ENCODE measurements at regions of chr3 and their contacts with region 1.

Region 1: DNA sequence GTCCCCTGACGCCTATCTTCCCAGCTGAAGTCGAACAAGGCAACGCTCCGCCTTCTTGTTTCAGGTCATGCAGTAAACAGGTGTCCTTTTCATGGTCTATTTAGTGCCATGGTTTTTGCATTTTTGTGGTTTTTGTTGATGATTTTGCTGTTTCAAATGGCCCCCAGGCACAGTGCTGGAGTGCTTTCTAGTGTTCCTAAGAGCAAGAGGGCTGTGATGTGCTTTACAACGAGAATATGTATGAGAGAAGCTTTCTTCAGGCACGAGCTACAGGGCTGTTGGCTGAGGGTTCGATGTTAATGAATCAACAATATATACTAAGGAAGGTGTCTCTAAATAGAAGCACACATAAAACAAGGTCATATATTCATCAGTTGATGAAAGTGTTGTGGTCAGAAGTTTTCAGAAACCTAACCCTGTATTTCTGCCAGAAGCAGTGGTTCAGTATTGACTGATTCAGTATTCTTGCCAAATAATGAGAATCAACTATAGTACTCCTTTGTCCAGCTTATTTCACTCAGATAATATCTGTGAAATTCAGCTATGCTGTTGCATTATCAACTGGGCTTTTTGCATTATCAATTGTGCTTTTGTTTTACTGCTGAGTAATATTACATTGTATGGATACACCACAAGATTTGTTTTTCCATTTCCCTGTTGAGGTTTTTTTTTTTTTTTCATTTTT is 18.5 kb downstream of the LIMD1 start:
- DNase-seq: peak; percentile 23
- ATAC-seq: no peak
- H3K4me3 ChIP-seq: no peak overlapping the region
- H3K27ac ChIP-seq: no peak overlapping the region
- H3K4me1 ChIP-seq: peaks cover 34% of the 10 kb centered on the region
- H3K27me3 ChIP-seq: no peaks in the 10 kb centered on the region
- CTCF ChIP-seq: no peak
- POLR2A ChIP-seq: no peak
- RAD21 ChIP-seq: no peak

Region 2: GRCh38 chr3:45626096-45626887 is 13.2 kb after region 1 on chr3:
- CTCF ChIA-PET with region 1: no interaction called
- POLR2A ChIA-PET with region 1: no interaction called
- dilution Hi-C with region 1: no loop called
- in situ Hi-C with region 1: no loop called
- intact Hi-C with region 1: loop called (anchors 2 kb)
- DNase-seq: peak; percentile 47
- ATAC-seq: no peak
- H3K4me3 ChIP-seq: no peak overlapping the region
- H3K27ac ChIP-seq: no peak overlapping the region
- H3K4me1 ChIP-seq: peaks cover 15% of the 10 kb centered on the region
- H3K27me3 ChIP-seq: no peaks in the 10 kb centered on the region
- CTCF ChIP-seq: no peak
- POLR2A ChIP-seq: no peak
- RAD21 ChIP-seq: no peak